CD8-positive, alpha-beta T cell (primary cell): ENCODE measurements at regions of chr5 and their contacts with region 1.

Region 1: DNA sequence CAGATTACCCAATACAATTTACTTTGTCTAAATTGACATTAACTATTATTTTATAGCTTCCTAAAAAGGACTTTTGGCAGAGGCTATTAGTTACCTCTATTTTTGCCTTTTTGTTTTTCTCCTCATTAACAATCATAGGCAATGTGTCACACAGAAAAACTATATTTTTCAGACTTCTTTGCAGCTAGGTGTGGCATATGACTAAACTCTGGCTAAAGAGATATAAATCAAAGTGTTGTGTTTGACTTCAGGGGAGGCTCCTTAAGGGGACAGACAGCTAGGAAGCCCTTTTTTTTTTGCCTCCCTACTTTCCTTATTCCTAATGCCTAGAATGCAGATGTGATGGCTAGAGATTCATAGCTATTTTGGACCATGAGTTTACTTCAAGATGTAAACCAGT is 19.7 kb upstream of the GCNT4 start:
- DNase-seq: no peak
- ATAC-seq: no peak
- H3K4me3 ChIP-seq: no peak overlapping the region
- H3K4me3 Mint-ChIP-seq: no peak overlapping the region
- H3K27ac ChIP-seq: no peak overlapping the region
- H3K27ac Mint-ChIP-seq: no peak overlapping the region
- H3K4me1 ChIP-seq: no peaks in the 10 kb centered on the region
- H3K4me1 Mint-ChIP-seq: peaks cover 6% of the 10 kb centered on the region
- H3K27me3 ChIP-seq: no peaks in the 10 kb centered on the region
- H3K27me3 Mint-ChIP-seq: no peaks in the 10 kb centered on the region
- CTCF ChIP-seq: no peak

Region 2: DNA sequence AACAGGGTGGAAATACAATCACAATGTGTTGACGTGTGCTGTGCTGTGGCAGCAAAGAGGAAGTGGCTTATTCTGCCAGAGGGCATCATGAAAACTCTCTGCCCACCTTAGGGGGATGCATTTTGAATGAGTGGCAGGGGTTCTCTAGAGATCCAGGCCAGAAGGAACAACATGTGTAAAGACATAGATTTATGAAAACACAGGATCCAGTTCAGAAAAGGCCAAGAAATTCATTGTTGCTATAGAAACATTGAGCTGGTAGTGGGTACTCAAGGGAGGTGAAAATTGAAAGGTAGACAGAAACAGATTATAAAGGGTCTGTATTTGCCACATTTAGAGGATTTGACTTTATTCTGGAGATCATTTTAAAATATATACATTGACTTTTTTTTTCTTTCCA is 849.3 kb before region 1 on chr5:
- CTCF ChIA-PET with region 1: no interaction called
- POLR2A ChIA-PET with region 1: no interaction called
- intact Hi-C with region 1: no loop called
- DNase-seq: no peak
- ATAC-seq: no peak
- H3K4me3 ChIP-seq: no peak overlapping the region
- H3K4me3 Mint-ChIP-seq: no peak overlapping the region
- H3K27ac ChIP-seq: no peak overlapping the region
- H3K27ac Mint-ChIP-seq: no peak overlapping the region
- H3K4me1 ChIP-seq: no peaks in the 10 kb centered on the region
- H3K4me1 Mint-ChIP-seq: no peaks in the 10 kb centered on the region
- H3K27me3 ChIP-seq: no peaks in the 10 kb centered on the region
- H3K27me3 Mint-ChIP-seq: peaks cover 7% of the 10 kb centered on the region
- CTCF ChIP-seq: no peak

Region 3: GRCh38 chr5:75059912-75060545 is 12.0 kb before region 1 on chr5:
- CTCF ChIA-PET with region 1: interaction called, 4 read pairs
- POLR2A ChIA-PET with region 1: interaction called, 15 read pairs
- intact Hi-C with region 1: no loop called
- DNase-seq: peak in 5 of 9 experiments; percentile 49 to 88 (median 75)
- ATAC-seq: peak; percentile 88
- H3K4me3 ChIP-seq: no peak overlapping the region
- H3K4me3 Mint-ChIP-seq: peak overlapping the region; percentile 13
- H3K27ac ChIP-seq: peak overlapping the region; percentile 70 to 72
- H3K27ac Mint-ChIP-seq: peak overlapping the region; percentile 91
- H3K4me1 ChIP-seq: peaks cover 81% of the 10 kb centered on the region
- H3K4me1 Mint-ChIP-seq: peaks cover 81% of the 10 kb centered on the region
- H3K27me3 ChIP-seq: no peaks in the 10 kb centered on the region
- H3K27me3 Mint-ChIP-seq: no peaks in the 10 kb centered on the region
- CTCF ChIP-seq: no peak